B cell (primary cell): ENCODE measurements at regions of chr7 and their contacts with region 1.

Region 1: DNA sequence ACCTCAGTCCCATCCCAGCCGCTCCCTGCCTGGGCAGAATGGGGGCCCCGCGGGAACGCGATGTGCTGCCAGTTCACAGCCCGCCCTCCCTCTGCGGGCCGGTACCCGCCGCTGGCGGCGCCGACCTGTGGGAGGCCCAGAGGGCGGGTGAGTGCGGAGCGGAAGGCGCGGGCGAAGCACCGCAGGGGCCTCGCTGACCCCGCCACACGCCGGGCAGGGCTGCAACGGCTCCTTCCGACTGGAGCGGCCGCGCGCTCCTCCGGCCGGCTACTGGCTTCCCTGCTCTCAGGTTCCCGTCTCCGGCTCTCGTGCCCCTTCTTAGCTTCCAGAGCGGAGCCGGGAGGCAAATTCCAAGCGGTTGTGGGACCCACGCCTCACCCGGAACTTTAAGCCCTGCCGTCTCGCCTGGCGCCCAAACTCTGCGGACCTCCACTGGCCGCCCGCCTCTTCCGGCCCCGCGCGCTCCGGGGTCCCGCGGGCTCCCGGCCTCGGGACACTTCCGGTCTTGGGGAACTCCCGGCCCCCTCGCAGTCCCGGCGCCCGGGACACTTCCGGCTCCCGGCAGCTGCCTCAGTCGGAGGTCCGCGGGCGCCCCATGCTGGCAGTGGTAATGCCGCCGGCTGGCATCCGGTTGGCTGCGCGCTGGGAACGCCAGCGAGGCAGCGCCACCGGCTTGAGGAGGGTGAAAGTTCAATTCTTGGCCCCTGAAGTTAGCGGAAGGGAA is at the start of gene CYREN:
- DNase-seq: peak; percentile 92
- ATAC-seq: peak; percentile 77
- H3K4me3 ChIP-seq: peak within 1 kb of the TSS; percentile 72 to 93 (median 83)
- H3K4me3 Mint-ChIP-seq: peak within 1 kb of the TSS; percentile 94
- H3K27ac ChIP-seq: peak within 1 kb of the TSS; percentile 96 to 97
- H3K27ac Mint-ChIP-seq: peak within 1 kb of the TSS; percentile 93
- H3K4me1 ChIP-seq: peaks cover 22 to 42% of the 10 kb centered on the region in 2 donors
- H3K4me1 Mint-ChIP-seq: peaks cover 60% of the 10 kb centered on the region
- H3K27me3 ChIP-seq: no peaks in the 10 kb centered on the region
- H3K27me3 Mint-ChIP-seq: no peaks in the 10 kb centered on the region
- CTCF ChIP-seq: peak; percentile 77
- total RNA-seq, gene CYREN: 51.6 and 54.6 TPM in 2 replicates

Region 2: DNA sequence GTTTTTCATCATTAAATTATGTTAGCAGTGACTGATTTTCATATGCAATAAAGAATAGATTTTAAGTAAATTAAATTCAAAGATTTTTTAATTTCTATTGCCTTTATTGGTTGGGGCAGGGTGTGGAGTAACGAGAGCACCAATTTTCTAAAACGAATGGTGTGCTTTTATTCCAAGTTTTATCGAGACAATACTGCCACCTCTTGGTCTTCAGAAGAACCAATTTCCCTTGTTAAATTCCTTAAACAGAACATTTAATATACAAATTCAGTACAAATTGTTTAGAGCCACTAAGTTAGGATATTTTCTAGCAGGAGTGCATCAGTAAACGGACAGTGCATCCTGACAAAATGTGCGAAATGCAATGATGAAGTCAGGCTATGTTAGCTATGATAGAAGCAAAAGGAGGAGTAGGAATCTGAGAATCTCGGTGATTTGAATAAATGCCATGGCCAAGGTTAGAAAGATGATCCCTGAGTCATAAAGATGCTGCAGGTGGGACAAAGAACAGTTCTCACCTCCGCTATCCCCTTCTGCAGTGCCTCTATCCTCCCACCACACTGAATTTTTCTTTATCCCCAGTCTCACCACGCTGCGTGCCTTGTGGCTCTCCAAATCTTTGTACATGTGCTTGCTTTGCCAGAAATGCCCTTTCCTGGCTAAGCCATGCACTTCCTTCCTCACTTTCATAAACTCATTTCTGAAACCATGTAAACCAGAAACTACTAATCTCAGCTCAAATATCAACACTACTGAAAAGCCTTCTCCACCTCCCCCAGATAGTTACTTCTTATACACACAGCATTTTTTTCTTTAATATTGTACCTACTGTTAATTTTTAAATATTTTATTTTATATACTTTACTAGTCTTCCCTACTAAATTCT is 216.0 kb before region 1 on chr7:
- CTCF ChIA-PET with region 1: interaction called, 10 read pairs
- POLR2A ChIA-PET with region 1: no interaction called
- intact Hi-C with region 1: no loop called
- DNase-seq: peak; percentile 47
- ATAC-seq: no peak
- H3K4me3 ChIP-seq: no peak overlapping the region
- H3K4me3 Mint-ChIP-seq: no peak overlapping the region
- H3K27ac ChIP-seq: no peak overlapping the region
- H3K27ac Mint-ChIP-seq: no peak overlapping the region
- H3K4me1 ChIP-seq: no peaks in the 10 kb centered on the region
- H3K4me1 Mint-ChIP-seq: no peaks in the 10 kb centered on the region
- H3K27me3 ChIP-seq: no peaks in the 10 kb centered on the region
- H3K27me3 Mint-ChIP-seq: no peaks in the 10 kb centered on the region
- CTCF ChIP-seq: peak; percentile 73

Region 3: DNA sequence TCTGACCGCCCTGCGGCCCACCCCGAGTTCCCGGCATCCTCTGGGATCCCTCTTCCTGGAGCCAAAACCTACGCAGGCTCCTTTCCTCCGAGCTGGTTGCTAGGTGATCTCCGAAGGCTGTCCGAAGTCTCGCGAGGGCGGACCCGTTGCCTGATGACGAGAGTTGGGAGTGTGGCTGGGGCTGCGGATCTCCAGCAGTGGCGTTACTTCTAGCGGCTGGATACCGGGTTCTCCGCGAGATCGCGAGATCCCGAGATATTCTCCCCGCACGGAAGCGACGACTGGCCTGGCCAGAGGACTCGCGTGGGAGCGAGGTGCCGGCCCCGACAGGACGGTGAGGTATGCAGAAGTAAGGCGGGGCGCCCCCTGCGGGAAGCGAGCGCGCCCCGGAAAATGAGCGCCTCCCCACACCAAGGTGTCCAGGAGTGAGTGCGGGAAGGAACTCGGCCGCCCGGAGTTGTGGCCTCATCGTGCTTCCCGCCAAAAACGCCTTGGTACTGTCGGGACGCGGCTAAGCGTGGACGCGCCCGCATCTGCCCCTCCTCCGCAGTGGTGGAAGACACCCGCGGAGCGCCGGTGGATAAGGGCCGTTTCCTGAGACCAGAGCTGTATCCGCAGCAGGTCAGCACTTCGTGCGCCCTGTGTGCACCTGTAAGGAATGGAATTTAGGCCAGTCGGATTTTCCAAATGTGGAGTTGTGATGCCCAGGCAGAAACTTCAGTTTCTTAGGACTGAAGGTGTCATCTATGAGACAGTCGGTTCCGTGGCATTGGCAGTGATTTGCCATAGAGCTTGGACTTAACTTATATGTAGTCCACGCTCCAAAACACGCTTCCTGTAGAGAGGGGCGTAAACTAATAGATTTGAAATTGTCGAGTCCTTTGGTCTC is 183.8 kb before region 1 on chr7 and contains the start of gene AGBL3:
- CTCF ChIA-PET with region 1: interaction called, 80 read pairs
- POLR2A ChIA-PET with region 1: interaction called, 38 read pairs
- intact Hi-C with region 1: loop called (anchors 1 kb)
- DNase-seq: peak; percentile 95
- ATAC-seq: peak; percentile 86
- H3K4me3 ChIP-seq: peak within 1 kb of the TSS; percentile 69 to 97 (median 94)
- H3K4me3 Mint-ChIP-seq: peak within 1 kb of the TSS; percentile 98
- H3K27ac ChIP-seq: peak within 1 kb of the TSS; percentile 88 to 93
- H3K27ac Mint-ChIP-seq: peak within 1 kb of the TSS; percentile 98
- H3K4me1 ChIP-seq: peaks cover 4 to 5% of the 10 kb centered on the region in 2 donors
- H3K4me1 Mint-ChIP-seq: peaks cover 34% of the 10 kb centered on the region
- H3K27me3 ChIP-seq: no peaks in the 10 kb centered on the region
- H3K27me3 Mint-ChIP-seq: no peaks in the 10 kb centered on the region
- CTCF ChIP-seq: peak; percentile 92
- total RNA-seq, gene AGBL3: 10.9 and 11.1 TPM in 2 replicates

Region 4: GRCh38 chr7:135147899-135148721 is 22.3 kb before region 1 on chr7 and contains the start of gene TMEM140:
- CTCF ChIA-PET with region 1: interaction called, 78 read pairs
- POLR2A ChIA-PET with region 1: interaction called, 32 read pairs
- intact Hi-C with region 1: loop called (anchors 1 kb)
- DNase-seq: peak; percentile 87
- ATAC-seq: peak; percentile 78
- H3K4me3 ChIP-seq: peak within 1 kb of the TSS; percentile 51 to 98 (median 72)
- H3K4me3 Mint-ChIP-seq: peak within 1 kb of the TSS; percentile 91
- H3K27ac ChIP-seq: peak within 1 kb of the TSS; percentile 86 to 90
- H3K27ac Mint-ChIP-seq: peak within 1 kb of the TSS; percentile 94
- H3K4me1 ChIP-seq: peaks cover 42 to 52% of the 10 kb centered on the region in 2 donors
- H3K4me1 Mint-ChIP-seq: peaks cover 62% of the 10 kb centered on the region
- H3K27me3 ChIP-seq: no peaks in the 10 kb centered on the region
- H3K27me3 Mint-ChIP-seq: no peaks in the 10 kb centered on the region
- CTCF ChIP-seq: no peak
- total RNA-seq, gene TMEM140: 79.1 and 84.9 TPM in 2 replicates

Region 5: DNA sequence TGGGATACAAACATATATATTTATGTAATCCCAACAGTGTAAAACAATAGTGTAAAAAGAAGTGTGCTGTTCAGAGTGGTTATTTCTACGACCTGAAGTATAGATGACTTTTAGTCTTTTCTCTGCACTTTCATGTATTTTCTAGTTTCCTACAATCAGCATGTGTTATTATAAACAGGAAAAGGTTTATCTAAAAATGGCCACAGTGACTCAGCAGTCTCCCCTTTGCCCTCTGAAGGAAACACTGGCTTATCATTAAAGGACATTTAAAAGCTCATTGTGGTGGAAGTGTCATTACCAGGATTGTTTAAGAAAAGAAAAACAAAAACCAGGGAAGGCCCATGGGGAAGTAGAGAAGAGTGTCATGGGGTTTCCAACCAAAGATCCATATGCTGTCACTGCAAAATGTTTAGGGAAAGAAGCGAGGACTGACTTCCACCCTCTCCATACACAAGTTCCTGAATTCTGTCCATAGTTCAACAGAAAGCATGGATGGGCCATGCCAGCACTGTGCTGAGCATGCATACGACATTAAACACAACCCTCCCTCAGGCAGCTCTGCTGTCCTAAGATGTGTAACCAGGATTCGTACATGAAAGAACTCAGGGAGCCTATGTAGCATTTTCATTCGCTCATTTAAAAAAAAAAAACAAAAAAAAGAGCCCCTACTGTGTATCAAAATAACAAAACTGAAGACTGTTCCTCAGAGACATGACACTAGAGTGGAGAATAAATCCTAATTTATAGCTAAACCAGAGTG is 10.2 kb before region 1 on chr7:
- CTCF ChIA-PET with region 1: interaction called, 41 read pairs
- POLR2A ChIA-PET with region 1: interaction called, 22 read pairs
- intact Hi-C with region 1: loop called (anchors 1 kb)
- DNase-seq: no peak
- ATAC-seq: peak; percentile 25
- H3K4me3 ChIP-seq: no peak overlapping the region
- H3K4me3 Mint-ChIP-seq: peak overlapping the region; percentile 78
- H3K27ac ChIP-seq: peak overlapping the region in 1 of 2 donors; percentile 59
- H3K27ac Mint-ChIP-seq: peak overlapping the region; percentile 92
- H3K4me1 ChIP-seq: peaks cover 26 to 32% of the 10 kb centered on the region in 2 donors
- H3K4me1 Mint-ChIP-seq: peaks cover 50% of the 10 kb centered on the region
- H3K27me3 ChIP-seq: no peaks in the 10 kb centered on the region
- H3K27me3 Mint-ChIP-seq: no peaks in the 10 kb centered on the region
- CTCF ChIP-seq: no peak

Region 6: DNA sequence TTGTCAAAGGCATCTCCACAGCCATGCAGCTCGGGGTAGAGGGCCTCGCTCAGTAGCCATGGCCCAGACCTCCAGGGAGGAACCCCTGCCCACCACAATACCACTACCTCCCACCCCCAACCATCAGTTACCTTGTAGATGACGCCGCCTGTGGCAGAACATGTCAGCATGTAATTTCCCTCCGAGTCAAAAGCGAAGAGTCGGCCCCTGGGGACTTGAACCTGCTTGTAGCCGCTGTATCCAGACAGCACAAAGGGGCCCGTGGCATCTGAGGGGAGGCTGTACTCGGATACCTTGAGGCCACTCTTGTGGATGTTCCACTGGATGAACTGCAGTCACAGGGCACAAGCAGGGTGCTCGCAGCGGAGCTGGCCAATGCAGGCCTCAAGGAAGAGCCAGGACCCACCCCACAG is 16.4 kb after region 1 on chr7:
- CTCF ChIA-PET with region 1: interaction called, 20 read pairs
- POLR2A ChIA-PET with region 1: interaction called, 4 read pairs
- intact Hi-C with region 1: no loop called
- DNase-seq: peak; percentile 49
- ATAC-seq: peak; percentile 56
- H3K4me3 ChIP-seq: no peak overlapping the region
- H3K4me3 Mint-ChIP-seq: peak overlapping the region; percentile 65
- H3K27ac ChIP-seq: no peak overlapping the region
- H3K27ac Mint-ChIP-seq: peak overlapping the region; percentile 60
- H3K4me1 ChIP-seq: peaks cover 9 to 16% of the 10 kb centered on the region in 2 donors
- H3K4me1 Mint-ChIP-seq: peaks cover 22% of the 10 kb centered on the region
- H3K27me3 ChIP-seq: no peaks in the 10 kb centered on the region
- H3K27me3 Mint-ChIP-seq: no peaks in the 10 kb centered on the region
- CTCF ChIP-seq: no peak

Region 7: GRCh38 chr7:135211179-135211945 is 40.9 kb after region 1 on chr7 and contains the start of gene WDR91:
- CTCF ChIA-PET with region 1: interaction called, 6 read pairs
- POLR2A ChIA-PET with region 1: interaction called, 9 read pairs
- intact Hi-C with region 1: loop called (anchors 1 kb)
- DNase-seq: peak; percentile 95
- ATAC-seq: peak; percentile 94
- H3K4me3 ChIP-seq: peak within 1 kb of the TSS; percentile 82 to 98 (median 88)
- H3K4me3 Mint-ChIP-seq: peak within 1 kb of the TSS; percentile 98
- H3K27ac ChIP-seq: peak within 1 kb of the TSS; percentile 77 to 92
- H3K27ac Mint-ChIP-seq: peak within 1 kb of the TSS; percentile 97
- H3K4me1 ChIP-seq: peaks cover 34 to 35% of the 10 kb centered on the region in 2 donors
- H3K4me1 Mint-ChIP-seq: peaks cover 48% of the 10 kb centered on the region
- H3K27me3 ChIP-seq: no peaks in the 10 kb centered on the region
- H3K27me3 Mint-ChIP-seq: no peaks in the 10 kb centered on the region
- CTCF ChIP-seq: no peak
- total RNA-seq, gene WDR91: 40.7 and 47.0 TPM in 2 replicates

Region 8: DNA sequence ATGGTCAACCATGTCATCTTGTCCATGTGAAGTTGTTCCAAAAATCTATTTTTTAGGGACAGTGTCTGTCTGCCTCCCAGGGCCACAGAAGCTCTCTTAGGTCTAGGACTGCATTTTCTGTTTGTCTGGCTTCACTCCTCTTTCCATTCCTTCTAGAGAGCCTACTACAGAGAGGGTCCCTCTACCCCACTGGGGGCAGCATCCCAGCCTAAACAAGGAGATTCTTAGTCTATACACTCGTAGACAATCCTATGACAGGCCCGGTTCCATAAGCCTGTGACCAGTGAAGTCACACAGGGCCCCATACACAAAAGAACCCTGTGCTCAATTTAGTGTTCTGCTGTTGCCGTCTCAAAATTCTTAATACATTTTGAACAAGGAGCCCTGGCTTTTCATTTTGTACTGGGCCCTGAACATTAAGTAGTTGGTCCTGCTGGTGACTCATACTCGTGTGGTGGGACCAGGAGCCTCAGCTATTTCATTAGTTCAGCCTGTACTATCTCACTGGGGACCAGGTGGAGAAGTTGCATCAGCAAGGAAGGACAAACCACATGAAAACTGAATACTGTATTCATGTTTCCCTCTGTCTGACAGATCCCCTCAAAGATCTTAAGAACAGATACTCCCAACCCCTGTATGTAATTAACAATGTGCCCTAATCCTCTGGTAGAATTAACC is 601.7 kb after region 1 on chr7:
- CTCF ChIA-PET with region 1: no interaction called
- POLR2A ChIA-PET with region 1: no interaction called
- intact Hi-C with region 1: no loop called
- DNase-seq: no peak
- ATAC-seq: no peak
- H3K4me3 ChIP-seq: no peak overlapping the region
- H3K4me3 Mint-ChIP-seq: no peak overlapping the region
- H3K27ac ChIP-seq: no peak overlapping the region
- H3K27ac Mint-ChIP-seq: no peak overlapping the region
- H3K4me1 ChIP-seq: no peaks in the 10 kb centered on the region
- H3K4me1 Mint-ChIP-seq: no peaks in the 10 kb centered on the region
- H3K27me3 ChIP-seq: peaks cover 0 to 6% (median 2%) of the 10 kb centered on the region in 4 experiments
- H3K27me3 Mint-ChIP-seq: peaks cover 19% of the 10 kb centered on the region
- CTCF ChIP-seq: no peak